K562 (cell line): ENCODE measurements at regions of chr3 and their contacts with region 1.

Region 1: GRCh38 chr3:23888617-23889228 is 28.1 kb downstream of the NKIRAS1 start:
- DNase-seq: peak in 2 of 4 experiments; percentile 30 to 58
- ATAC-seq: peak; percentile 48; the same call in 1 of the 3 replicates
- H3K4me3 ChIP-seq: no peak overlapping the region
- H3K27ac ChIP-seq: no peak overlapping the region
- H3K4me1 ChIP-seq: no peaks in the 10 kb centered on the region
- H3K27me3 ChIP-seq: no peaks in the 10 kb centered on the region
- CTCF ChIP-seq: peak; percentile 48 to 89 (median 52); a peak in 4 of 6 replicates
- EP300 ChIP-seq: no peak
- POLR2A ChIP-seq: no peak
- RAD21 ChIP-seq: peak; percentile 91 to 92

Region 2: DNA sequence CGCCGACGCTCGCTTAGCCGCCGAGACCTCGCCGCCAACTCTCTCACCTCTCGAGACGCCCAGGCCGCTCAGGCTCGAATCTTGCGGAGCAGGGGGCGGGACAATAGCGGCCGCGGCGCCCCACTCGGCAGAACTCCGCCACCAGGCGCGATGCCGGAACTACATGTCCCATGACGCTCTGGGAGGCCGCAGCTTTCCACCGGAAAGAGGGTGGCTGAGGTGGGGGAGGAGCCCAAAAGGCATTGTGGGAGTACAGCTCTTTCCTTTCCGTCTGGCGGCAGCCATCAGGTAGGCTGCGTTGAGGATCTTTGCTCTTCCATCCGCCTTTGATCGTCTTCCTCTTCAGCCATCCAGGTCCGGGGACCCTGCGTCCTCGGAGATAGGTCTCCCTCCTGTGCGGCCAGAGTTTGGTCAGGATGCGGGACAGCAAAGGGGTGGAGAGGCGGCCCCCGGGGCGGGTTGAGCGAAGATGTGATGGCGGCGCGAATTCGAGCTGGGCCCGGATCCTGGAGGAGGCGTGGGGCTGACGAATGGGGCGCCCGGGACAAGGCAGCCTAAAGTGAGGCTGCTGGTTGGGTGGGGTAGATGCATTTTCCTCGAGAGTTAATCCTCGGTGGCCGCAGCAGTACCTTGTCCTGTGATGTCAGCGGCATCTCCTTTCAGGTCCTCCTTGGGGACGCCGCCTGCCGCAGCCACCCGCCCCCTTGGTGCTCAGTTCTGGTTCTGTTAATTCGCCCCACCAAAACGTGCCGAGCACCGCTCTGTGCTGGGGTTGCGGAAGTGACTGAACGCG is 28.4 kb after region 1 on chr3 and contains the starts of genes NKIRAS1 and RPL15:
- CTCF ChIA-PET with region 1: no interaction called
- POLR2A ChIA-PET with region 1: interaction called, 35 read pairs
- in situ Hi-C with region 1: no loop called
- intact Hi-C with region 1: no loop called
- DNase-seq: peak; percentile 94 to 99 (median 96)
- ATAC-seq: peak; percentile 93
- H3K4me3 ChIP-seq: peak within 1 kb of the TSS; percentile 73
- H3K27ac ChIP-seq: peak within 1 kb of the TSS; percentile 91
- H3K4me1 ChIP-seq: peaks cover 6 to 19% of the 10 kb centered on the region in 2 experiments
- H3K27me3 ChIP-seq: no peaks in the 10 kb centered on the region
- CTCF ChIP-seq: peak; percentile 28 to 45 (median 37); a peak in 4 of 6 replicates
- EP300 ChIP-seq: peak; percentile 47
- POLR2A ChIP-seq: peak; percentile 100
- RAD21 ChIP-seq: no peak; a peak in 1 of 4 replicates
- polyA plus RNA-seq, gene NKIRAS1: 5.5 to 5.6 TPM
- polyA plus RNA-seq, gene RPL15: 7,800 to 8,850 TPM

Region 3: DNA sequence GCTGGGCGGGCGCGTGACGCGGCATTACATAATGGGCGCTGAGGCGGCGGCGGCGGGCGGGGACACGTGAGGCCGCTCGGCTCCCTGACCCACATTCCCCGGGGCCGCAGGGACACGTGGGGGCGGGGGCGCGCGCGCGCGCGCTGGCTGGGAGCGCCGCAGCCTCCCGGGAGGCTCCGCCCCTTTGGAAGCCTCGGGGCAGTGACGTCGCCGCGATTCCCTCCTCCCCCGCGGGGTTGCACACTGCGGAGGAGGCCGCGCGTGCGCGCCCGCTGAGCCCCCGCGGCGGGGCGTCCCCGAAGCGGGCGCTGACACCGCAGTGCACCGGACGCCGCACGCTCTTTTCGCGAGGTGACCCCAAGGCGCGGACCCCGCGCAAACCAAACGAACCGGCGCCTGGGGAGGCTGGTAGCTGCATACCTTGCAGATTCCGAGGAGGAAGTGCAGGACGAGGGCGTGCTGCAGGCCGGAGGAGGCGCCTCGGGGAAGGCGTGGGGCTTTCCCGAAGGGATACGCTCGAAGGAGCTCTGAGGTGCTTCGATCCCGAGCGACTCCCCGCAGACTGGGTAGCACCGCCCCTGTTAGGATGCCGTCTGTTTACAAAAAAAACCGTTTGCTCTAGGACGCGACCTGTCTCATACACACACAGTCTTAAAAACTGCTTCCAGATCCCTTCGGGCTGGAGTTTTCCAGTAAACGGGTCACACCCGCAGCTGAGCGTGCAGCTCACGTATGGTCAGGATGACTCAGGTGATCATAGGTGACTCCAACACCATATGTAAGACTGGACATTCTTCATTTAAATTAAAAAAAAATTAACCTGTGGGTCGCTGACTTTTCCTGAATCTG is 57.4 kb after region 1 on chr3:
- CTCF ChIA-PET with region 1: no interaction called
- POLR2A ChIA-PET with region 1: interaction called, 3 read pairs
- in situ Hi-C with region 1: no loop called
- intact Hi-C with region 1: loop called (anchors 2 kb)
- DNase-seq: peak; percentile 99
- ATAC-seq: peak; percentile 84
- H3K4me3 ChIP-seq: peak overlapping the region; percentile 59
- H3K27ac ChIP-seq: peak overlapping the region; percentile 82
- H3K4me1 ChIP-seq: peaks cover 17 to 46% of the 10 kb centered on the region in 2 experiments
- H3K27me3 ChIP-seq: no peaks in the 10 kb centered on the region
- CTCF ChIP-seq: no peak
- EP300 ChIP-seq: no peak; the same call in 1 of the 2 replicates
- POLR2A ChIP-seq: peak; percentile 73
- RAD21 ChIP-seq: peak in 1 of 2 experiments; percentile 3; a peak in 2 of 4 replicates

Region 4: GRCh38 chr3:23999012-23999641 is 110.4 kb after region 1 on chr3:
- CTCF ChIA-PET with region 1: interaction called, 10 read pairs
- POLR2A ChIA-PET with region 1: no interaction called
- in situ Hi-C with region 1: no loop called
- intact Hi-C with region 1: loop called (anchors 2 kb)
- DNase-seq: peak; percentile 55 to 78 (median 58)
- ATAC-seq: peak; percentile 73
- H3K4me3 ChIP-seq: no peak overlapping the region
- H3K27ac ChIP-seq: no peak overlapping the region
- H3K4me1 ChIP-seq: no peaks in the 10 kb centered on the region
- H3K27me3 ChIP-seq: peaks cover 4 to 11% of the 10 kb centered on the region in 2 experiments; a peak in 3 of 5 replicates
- CTCF ChIP-seq: peak; percentile 90 to 98 (median 96)
- EP300 ChIP-seq: no peak
- POLR2A ChIP-seq: no peak
- RAD21 ChIP-seq: peak; percentile 99

Region 5: GRCh38 chr3:24145981-24146822 is 257.5 kb after region 1 on chr3:
- CTCF ChIA-PET with region 1: interaction called, 4 read pairs
- POLR2A ChIA-PET with region 1: no interaction called
- in situ Hi-C with region 1: no loop called
- intact Hi-C with region 1: loop called (anchors 10 kb)
- DNase-seq: no peak
- ATAC-seq: no peak
- H3K4me3 ChIP-seq: no peak overlapping the region
- H3K27ac ChIP-seq: no peak overlapping the region
- H3K4me1 ChIP-seq: no peaks in the 10 kb centered on the region
- H3K27me3 ChIP-seq: no peaks in the 10 kb centered on the region
- CTCF ChIP-seq: no peak
- EP300 ChIP-seq: no peak
- POLR2A ChIP-seq: no peak
- RAD21 ChIP-seq: no peak

Region 6: DNA sequence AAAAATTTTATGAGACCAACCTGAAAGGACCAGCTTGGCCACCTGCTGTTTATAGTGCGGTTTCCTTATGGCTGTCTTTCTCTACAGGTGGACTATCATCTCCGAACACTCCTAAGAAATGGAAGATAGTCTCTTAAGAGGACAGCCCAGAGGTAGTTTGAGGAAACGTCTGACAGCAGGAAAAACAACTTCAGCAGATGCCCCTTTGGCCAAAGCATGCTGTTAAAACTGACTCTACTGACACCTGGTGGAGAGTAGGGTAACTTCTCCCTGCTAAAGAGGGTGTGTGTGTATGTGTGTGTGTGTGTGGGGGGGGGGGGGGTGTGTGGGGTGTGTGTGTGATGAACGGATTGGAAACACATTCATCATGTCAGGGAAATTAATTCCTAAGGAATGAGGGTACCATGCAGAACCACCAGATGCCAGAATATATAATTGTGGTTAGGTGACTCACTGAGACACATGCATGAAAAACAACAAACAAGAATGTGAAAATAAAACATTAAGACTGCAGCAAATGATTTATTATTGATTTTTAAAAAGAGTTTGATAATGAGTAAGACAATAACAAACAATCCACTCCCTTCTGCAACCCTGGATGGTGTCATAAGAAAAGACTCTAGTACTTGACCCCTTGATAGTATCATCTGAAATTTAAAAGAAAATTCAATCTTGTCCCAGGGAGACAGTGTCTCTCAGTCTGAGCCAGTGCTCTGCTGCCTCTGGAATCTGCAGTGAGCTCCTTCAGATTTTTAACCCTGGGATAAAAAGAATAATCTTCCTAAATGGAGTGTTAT is 349.4 kb after region 1 on chr3:
- CTCF ChIA-PET with region 1: interaction called, 14 read pairs
- POLR2A ChIA-PET with region 1: no interaction called
- in situ Hi-C with region 1: no loop called
- intact Hi-C with region 1: loop called (anchors 2 kb)
- DNase-seq: peak; percentile 76 to 85 (median 79)
- ATAC-seq: peak; percentile 96
- H3K4me3 ChIP-seq: no peak overlapping the region
- H3K27ac ChIP-seq: no peak overlapping the region
- H3K4me1 ChIP-seq: no peaks in the 10 kb centered on the region
- H3K27me3 ChIP-seq: no peaks in the 10 kb centered on the region
- CTCF ChIP-seq: peak; percentile 78 to 88 (median 84)
- EP300 ChIP-seq: no peak
- POLR2A ChIP-seq: no peak
- RAD21 ChIP-seq: peak; percentile 83 to 84